ENCODE measurements at regions of chr12 and their contacts with region 1.

Region 1: GRCh38 chr12:57088459-57089248 is at the start of gene NAB2:
- DNase-seq: peak; percentile 92
- ATAC-seq: peak; percentile 54
- H3K4me3 ChIP-seq: peak within 1 kb of the TSS; percentile 94
- H3K27ac ChIP-seq: peak within 1 kb of the TSS; percentile 98
- H3K4me1 ChIP-seq: peaks cover 25% of the 10 kb centered on the region
- H3K27me3 ChIP-seq: no peaks in the 10 kb centered on the region
- CTCF ChIP-seq: no peak
- total RNA-seq, gene NAB2: 17.4 and 20.2 TPM in 2 replicates

Region 2: DNA sequence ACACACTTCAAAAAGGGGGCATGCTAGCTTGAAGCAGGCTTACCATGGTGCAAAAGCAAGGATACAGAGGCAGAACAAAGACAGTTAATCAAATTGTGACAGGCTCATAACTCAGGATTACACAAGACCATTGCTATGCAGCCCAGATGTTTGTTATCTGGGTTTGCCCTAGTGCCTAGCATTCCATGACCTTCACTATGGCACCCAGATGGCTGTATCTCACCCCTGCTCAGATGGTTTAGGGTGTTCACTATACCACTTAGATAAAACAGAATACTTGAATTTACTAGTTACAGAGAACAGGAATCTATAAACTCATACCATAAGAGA is 210.7 kb before region 1 on chr12:
- CTCF ChIA-PET with region 1: no interaction called
- POLR2A ChIA-PET with region 1: no interaction called
- intact Hi-C with region 1: no loop called
- DNase-seq: no peak
- ATAC-seq: no peak
- H3K4me3 ChIP-seq: no peak overlapping the region
- H3K27ac ChIP-seq: no peak overlapping the region
- H3K4me1 ChIP-seq: no peaks in the 10 kb centered on the region
- H3K27me3 ChIP-seq: no peaks in the 10 kb centered on the region
- CTCF ChIP-seq: no peak

Region 3: GRCh38 chr12:57111031-57111734 is 22.5 kb after region 1 on chr12 and contains the start of gene STAT6:
- CTCF ChIA-PET with region 1: interaction called, 17 read pairs
- POLR2A ChIA-PET with region 1: interaction called, 6 read pairs
- intact Hi-C with region 1: loop called (anchors 1 kb)
- DNase-seq: peak; percentile 59
- ATAC-seq: peak; percentile 53
- H3K4me3 ChIP-seq: peak within 1 kb of the TSS; percentile 69
- H3K27ac ChIP-seq: peak within 1 kb of the TSS; percentile 82
- H3K4me1 ChIP-seq: peaks cover 32% of the 10 kb centered on the region
- H3K27me3 ChIP-seq: no peaks in the 10 kb centered on the region
- CTCF ChIP-seq: no peak
- total RNA-seq, gene STAT6: 20.8 and 28.4 TPM in 2 replicates

Measured in PC-3 (cell line).